Panc1 (cell line): ENCODE measurements at regions of chr5 and their contacts with region 1.

Region 1: DNA sequence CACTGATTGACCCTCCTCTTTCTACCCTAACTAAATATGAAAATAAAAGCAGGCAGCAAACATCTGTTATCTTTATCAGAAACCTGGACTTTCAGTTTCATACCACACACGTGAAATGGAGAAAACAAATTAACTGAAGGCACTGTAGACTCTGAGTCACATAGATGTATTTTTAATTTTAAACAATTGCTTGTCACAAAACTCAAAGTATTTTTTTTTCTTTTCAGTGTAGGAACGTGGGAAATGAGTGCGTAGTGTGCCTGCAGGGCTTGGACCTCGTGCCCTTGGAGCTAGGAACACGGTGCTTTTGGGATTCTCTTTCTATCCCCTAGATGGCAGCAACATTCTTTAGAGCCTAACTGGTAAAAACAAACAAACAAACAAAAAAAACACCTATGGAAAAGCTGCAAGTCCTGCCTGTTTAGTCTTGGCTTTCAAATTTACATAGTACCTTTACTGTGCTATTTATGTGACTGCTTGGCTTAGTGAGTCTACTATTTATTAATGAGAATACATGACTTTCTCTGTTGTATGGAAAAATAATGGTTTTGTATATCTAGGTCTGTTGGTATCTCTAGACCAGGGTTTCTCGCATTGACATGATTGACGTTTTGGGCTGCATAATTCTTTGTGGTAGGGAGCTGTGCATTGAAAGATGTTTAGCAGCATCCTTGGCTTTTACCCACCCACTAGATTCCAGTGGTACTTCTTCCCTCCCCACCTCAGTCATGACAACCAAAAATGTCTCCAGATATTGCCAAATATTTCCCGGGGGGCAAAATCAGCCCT is 16.8 kb upstream of the ACTBL2 start:
- DNase-seq: no peak
- ATAC-seq: peak; percentile 84
- H3K4me3 ChIP-seq: peak overlapping the region in 1 of 2 experiments; percentile 10; a peak in 1 of 4 replicates
- H3K27ac ChIP-seq: peak overlapping the region; percentile 94
- H3K4me1 ChIP-seq: peaks cover 21% of the 10 kb centered on the region
- H3K27me3 ChIP-seq: no peaks in the 10 kb centered on the region
- CTCF ChIP-seq: peak; percentile 88

Region 2: DNA sequence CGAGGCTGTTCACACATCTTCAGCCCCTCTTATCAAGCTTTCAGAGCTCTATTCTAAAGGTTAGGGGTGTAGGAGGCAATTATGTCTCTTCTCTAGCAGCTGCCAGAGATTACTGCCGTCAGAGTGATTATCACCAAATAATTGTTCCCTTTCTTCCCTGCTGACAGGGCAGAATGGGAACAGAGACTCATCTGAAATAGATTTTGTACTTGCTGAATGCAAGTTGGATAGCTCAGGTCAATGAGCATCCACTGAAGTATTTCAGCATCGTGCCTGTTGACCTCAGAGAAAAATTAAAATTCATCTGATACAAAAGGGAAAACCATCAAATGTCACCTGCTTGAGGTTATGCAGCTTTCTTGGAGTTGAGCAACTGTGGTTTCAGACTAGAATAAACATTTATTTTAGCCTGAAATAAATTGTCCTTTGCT is 897.8 kb before region 1 on chr5:
- CTCF ChIA-PET with region 1: no interaction called
- POLR2A ChIA-PET with region 1: no interaction called
- in situ Hi-C with region 1: no loop called
- intact Hi-C with region 1: no loop called
- DNase-seq: no peak
- ATAC-seq: no peak
- H3K4me3 ChIP-seq: no peak overlapping the region
- H3K27ac ChIP-seq: no peak overlapping the region
- H3K4me1 ChIP-seq: no peaks in the 10 kb centered on the region
- H3K27me3 ChIP-seq: 0 out of 2 replicates have a peak, but pooled peaks cover 2% of the 10 kb centered on the region
- CTCF ChIP-seq: no peak

Region 3: DNA sequence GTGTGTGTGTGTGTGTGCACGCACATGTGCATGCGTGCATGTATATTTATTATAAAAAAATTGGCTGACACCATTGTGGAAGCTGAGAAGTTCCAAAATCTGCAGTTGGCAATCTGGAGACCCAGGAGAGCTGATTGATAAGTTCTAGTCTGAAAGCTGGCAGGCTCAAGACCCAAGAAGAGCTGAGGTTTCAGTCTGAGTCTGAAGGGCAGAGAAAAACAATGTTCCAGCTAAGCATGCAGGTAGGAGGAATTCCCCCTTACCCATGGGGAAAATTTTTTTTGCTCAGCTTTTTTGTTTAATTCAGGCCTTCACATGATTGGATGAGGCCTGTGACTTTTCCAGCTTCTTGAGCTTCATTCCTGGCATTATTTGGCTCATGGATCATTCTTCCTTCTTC is 14.3 kb after region 1 on chr5:
- CTCF ChIA-PET with region 1: no interaction called
- POLR2A ChIA-PET with region 1: no interaction called
- in situ Hi-C with region 1: no loop called
- intact Hi-C with region 1: no loop called
- DNase-seq: no peak
- ATAC-seq: no peak
- H3K4me3 ChIP-seq: no peak overlapping the region
- H3K27ac ChIP-seq: no peak overlapping the region; the same call in 1 of the 2 replicates
- H3K4me1 ChIP-seq: no peaks in the 10 kb centered on the region
- H3K27me3 ChIP-seq: no peaks in the 10 kb centered on the region
- CTCF ChIP-seq: no peak

Region 4: GRCh38 chr5:57566914-57567313 is 67.5 kb after region 1 on chr5:
- CTCF ChIA-PET with region 1: no interaction called
- POLR2A ChIA-PET with region 1: no interaction called
- in situ Hi-C with region 1: no loop called
- intact Hi-C with region 1: no loop called
- DNase-seq: no peak
- ATAC-seq: no peak
- H3K4me3 ChIP-seq: no peak overlapping the region
- H3K27ac ChIP-seq: no peak overlapping the region
- H3K4me1 ChIP-seq: no peaks in the 10 kb centered on the region
- H3K27me3 ChIP-seq: no peaks in the 10 kb centered on the region
- CTCF ChIP-seq: no peak

Region 5: GRCh38 chr5:57692582-57693487 is 193.4 kb after region 1 on chr5:
- CTCF ChIA-PET with region 1: interaction called, 3 read pairs
- POLR2A ChIA-PET with region 1: no interaction called
- in situ Hi-C with region 1: no loop called
- intact Hi-C with region 1: loop called (anchors 5 kb)
- DNase-seq: peak; percentile 95
- ATAC-seq: peak; percentile 99
- H3K4me3 ChIP-seq: peak overlapping the region; percentile 32 to 50
- H3K27ac ChIP-seq: peak overlapping the region; percentile 100
- H3K4me1 ChIP-seq: peaks cover 43% of the 10 kb centered on the region
- H3K27me3 ChIP-seq: no peaks in the 10 kb centered on the region
- CTCF ChIP-seq: no peak

Region 6: GRCh38 chr5:57772512-57772911 is 273.1 kb after region 1 on chr5:
- CTCF ChIA-PET with region 1: no interaction called
- POLR2A ChIA-PET with region 1: no interaction called
- in situ Hi-C with region 1: no loop called
- intact Hi-C with region 1: loop called (anchors 2 kb)
- DNase-seq: no peak
- ATAC-seq: no peak
- H3K4me3 ChIP-seq: no peak overlapping the region
- H3K27ac ChIP-seq: peak overlapping the region; percentile 56; the same call in 1 of the 2 replicates
- H3K4me1 ChIP-seq: peaks cover 7% of the 10 kb centered on the region; the same call in 1 of the 2 replicates
- H3K27me3 ChIP-seq: no peaks in the 10 kb centered on the region
- CTCF ChIP-seq: no peak

Region 7: DNA sequence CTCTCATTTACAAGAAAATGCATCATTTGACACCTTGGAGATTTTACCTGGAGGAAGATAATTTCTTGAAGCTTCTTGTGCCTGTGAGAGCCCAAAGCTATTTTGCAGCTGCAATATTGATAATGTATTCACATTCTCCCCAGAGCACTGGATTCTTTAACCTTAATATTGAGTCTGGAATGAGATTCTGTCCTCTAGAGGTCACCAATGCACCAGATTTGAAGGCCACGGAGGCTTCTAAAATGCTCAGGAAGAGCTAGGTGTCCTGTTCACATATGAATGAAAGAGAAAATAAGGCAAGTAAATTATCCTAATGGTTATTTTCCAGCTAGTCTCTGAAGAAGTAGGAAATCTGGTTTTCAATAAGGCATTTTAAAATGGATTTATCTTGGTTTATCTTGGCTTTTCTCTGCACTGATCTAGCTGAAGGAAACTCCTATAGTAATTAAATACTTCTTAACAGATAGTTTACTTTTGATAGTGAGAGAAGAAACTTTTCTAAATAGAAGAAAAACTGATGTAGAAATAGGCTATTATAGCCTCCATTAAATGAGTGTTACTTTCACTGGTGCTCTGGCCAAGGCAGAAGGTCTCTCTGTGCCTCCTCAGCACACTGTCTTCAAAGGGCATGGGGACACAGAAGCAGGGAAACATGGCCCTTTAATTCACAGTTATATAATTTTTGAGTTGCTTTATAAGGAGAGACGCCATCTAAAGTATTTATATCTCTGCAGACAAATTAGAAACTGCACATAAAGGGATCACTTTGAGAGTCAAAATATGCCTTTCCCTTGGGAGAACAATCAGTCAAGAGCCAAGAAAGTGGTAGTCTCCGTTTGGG is 280.1 kb after region 1 on chr5:
- CTCF ChIA-PET with region 1: interaction called, 13 read pairs
- POLR2A ChIA-PET with region 1: no interaction called
- in situ Hi-C with region 1: no loop called
- intact Hi-C with region 1: no loop called
- DNase-seq: peak; percentile 61
- ATAC-seq: peak; percentile 89
- H3K4me3 ChIP-seq: no peak overlapping the region
- H3K27ac ChIP-seq: peak overlapping the region; percentile 89
- H3K4me1 ChIP-seq: peaks cover 28% of the 10 kb centered on the region
- H3K27me3 ChIP-seq: no peaks in the 10 kb centered on the region
- CTCF ChIP-seq: peak; percentile 71

Region 8: DNA sequence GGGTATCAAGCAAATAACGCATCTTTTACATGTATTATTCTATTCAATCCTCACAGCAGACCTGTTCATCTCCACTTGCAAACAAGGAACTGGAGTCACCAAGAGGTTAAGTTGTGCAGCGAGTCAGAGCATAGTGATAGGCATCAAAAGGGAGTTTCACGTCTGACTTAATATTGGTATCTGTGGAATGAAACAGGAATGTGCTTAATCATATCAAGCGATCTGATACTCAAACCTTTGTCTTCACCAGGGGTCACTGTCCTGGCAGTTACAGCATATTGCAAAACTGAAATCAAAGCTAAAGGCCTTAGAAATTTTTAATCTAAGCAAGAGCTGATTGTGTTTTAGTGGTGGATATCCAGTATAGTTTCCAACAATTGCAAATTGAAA is 688.8 kb after region 1 on chr5:
- CTCF ChIA-PET with region 1: interaction called, 3 read pairs
- POLR2A ChIA-PET with region 1: no interaction called
- in situ Hi-C with region 1: no loop called
- intact Hi-C with region 1: loop called (anchors 10 kb)
- DNase-seq: peak; percentile 73
- ATAC-seq: peak; percentile 96
- H3K4me3 ChIP-seq: peak overlapping the region in 1 of 2 experiments; percentile 31; a peak in 2 of 4 replicates
- H3K27ac ChIP-seq: peak overlapping the region; percentile 100
- H3K4me1 ChIP-seq: peaks cover 57% of the 10 kb centered on the region
- H3K27me3 ChIP-seq: no peaks in the 10 kb centered on the region
- CTCF ChIP-seq: peak; percentile 26; the same call in 1 of the 2 replicates